Dendritic cell treated with granulocyte-macrophage colony-stimulating factor and Interleukin-4, amounts not matched to agents 40 ng/mL and 50 ng/mL, for 4 days (primary cell): ENCODE measurements at regions of chr14 and their contacts with region 1.

Region 1: GRCh38 chr14:59632381-59632780 is 55.8 kb upstream of the CCDC175 start:
- H3K4me3 Mint-ChIP-seq: no peak overlapping the region
- H3K27ac Mint-ChIP-seq: no peak overlapping the region
- H3K4me1 Mint-ChIP-seq: peaks cover 15% of the 10 kb centered on the region
- H3K27me3 Mint-ChIP-seq: peaks cover 41% of the 10 kb centered on the region

Region 2: DNA sequence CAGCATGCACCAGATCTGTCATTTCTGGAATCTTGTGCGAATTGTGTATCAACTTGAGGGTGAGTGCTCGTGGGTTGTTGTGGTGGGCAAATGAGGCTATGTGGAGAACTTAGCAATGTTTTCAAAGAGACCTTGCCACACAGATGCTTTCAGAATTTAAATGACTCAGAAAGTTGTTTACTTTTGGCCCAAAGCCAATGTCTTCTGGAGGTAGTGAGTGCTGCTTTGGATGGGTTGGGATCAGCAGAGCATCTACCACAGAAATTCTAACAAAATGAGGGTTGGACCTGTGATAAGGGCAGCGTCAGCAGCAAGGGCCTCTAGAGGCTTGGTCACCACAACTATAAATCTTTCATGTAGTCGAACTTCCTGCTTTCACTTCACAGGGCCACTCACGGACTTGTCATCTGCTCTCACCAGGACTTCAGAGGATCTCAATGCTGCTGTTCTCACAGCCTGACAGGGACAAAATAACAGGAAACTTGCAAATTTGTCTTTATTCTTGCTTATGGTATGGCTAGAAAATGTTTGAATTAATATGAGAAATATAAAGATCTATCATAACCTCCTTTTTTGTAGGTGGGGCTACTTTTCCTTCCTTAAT is 883.2 kb before region 1 on chr14:
- intact Hi-C with region 1: no loop called
- H3K4me3 Mint-ChIP-seq: peak overlapping the region; percentile 60
- H3K27ac Mint-ChIP-seq: peak overlapping the region; percentile 92
- H3K4me1 Mint-ChIP-seq: peaks cover 82% of the 10 kb centered on the region
- H3K27me3 Mint-ChIP-seq: no peaks in the 10 kb centered on the region

Region 3: DNA sequence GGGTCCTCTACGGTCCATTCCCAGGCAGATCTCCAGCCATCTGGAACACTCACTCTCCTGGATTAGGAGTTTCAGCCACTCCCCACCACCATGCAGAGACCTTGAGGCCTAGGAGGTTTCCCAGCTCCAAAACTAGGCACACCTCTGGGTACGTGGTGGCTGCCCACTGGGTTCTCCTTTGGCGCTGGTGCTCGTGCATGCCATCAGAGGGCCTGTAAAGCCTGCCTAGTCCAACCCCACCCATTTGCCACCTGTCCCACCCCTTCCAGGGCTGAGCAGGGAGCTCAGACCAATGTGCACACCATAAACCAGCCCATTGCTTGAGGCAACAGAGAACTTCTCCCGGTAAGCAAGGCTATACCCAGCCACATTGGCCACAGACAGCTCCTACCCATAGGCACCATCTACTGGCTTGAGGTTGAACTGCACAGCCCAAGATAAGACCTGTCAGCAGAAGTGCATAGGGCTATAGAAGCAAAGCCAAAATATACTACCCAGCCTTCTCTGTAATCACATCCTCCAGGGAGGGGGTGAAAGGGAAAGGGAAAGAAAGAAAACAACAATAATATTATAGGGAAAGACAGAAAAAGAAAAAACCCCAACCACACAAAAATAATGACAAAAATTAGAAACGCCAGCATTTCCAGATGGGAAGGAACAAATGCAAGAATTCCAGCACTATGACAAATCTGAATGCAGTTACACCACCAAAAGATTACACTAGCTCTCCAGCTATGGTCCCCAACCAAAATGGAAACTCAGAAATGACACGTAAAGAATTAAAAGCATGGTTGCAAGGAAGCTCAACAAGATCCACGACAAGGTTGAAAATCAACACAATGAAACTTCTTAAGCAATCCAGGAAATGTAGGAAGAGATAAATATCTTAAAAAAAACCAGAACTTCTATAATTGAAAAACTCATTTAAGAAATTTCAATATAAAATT is 56.1 kb after region 1 on chr14:
- intact Hi-C with region 1: loop called (anchors 5 kb)
- H3K4me3 Mint-ChIP-seq: no peak overlapping the region
- H3K27ac Mint-ChIP-seq: no peak overlapping the region
- H3K4me1 Mint-ChIP-seq: peaks cover 9% of the 10 kb centered on the region
- H3K27me3 Mint-ChIP-seq: no peaks in the 10 kb centered on the region

Region 4: GRCh38 chr14:59897761-59898383 is 265.5 kb after region 1 on chr14:
- intact Hi-C with region 1: loop called (anchors 1 kb)
- H3K4me3 Mint-ChIP-seq: no peak overlapping the region
- H3K27ac Mint-ChIP-seq: peak overlapping the region; percentile 63
- H3K4me1 Mint-ChIP-seq: peaks cover 11% of the 10 kb centered on the region
- H3K27me3 Mint-ChIP-seq: no peaks in the 10 kb centered on the region

Region 5: GRCh38 chr14:59918824-59919569 is 286.6 kb after region 1 on chr14:
- intact Hi-C with region 1: loop called (anchors 1 kb)
- H3K4me3 Mint-ChIP-seq: peak overlapping the region; percentile 78
- H3K27ac Mint-ChIP-seq: peak overlapping the region; percentile 67
- H3K4me1 Mint-ChIP-seq: peaks cover 11% of the 10 kb centered on the region
- H3K27me3 Mint-ChIP-seq: peaks cover 32% of the 10 kb centered on the region